Left lung (tissue), 14 donors: ENCODE measurements at regions of chr2 and their contacts with region 1.

Region 1: GRCh38 chr2:144516981-144517865 is 2.7 kb downstream of the ZEB2 start:
- DNase-seq: peak in 1 of 4 donors; percentile 92
- ATAC-seq: peak; percentile 28
- H3K4me3 ChIP-seq: peak overlapping the region; percentile 49 to 65
- H3K27ac ChIP-seq: peak overlapping the region; percentile 98 to 99
- H3K4me1 ChIP-seq: peaks cover 0 to 39% of the 10 kb centered on the region in 2 donors
- H3K27me3 ChIP-seq: peaks cover 4 to 78% of the 10 kb centered on the region in 2 donors
- CTCF ChIP-seq: no peak

Region 2: GRCh38 chr2:143433251-143433650 is 1084.0 kb before region 1 on chr2:
- intact Hi-C with region 1: loop called in 1 of 2 experiments (anchors 10 kb)
- DNase-seq: peak in 2 of 4 donors; percentile 54 to 77
- ATAC-seq: peak; percentile 65
- H3K4me3 ChIP-seq: no peak overlapping the region
- H3K27ac ChIP-seq: no peak overlapping the region
- H3K4me1 ChIP-seq: peaks cover 0 to 4% of the 10 kb centered on the region in 2 donors
- H3K27me3 ChIP-seq: no peaks in the 10 kb centered on the region
- CTCF ChIP-seq: peak in 1 of 2 donors; percentile 5